AG04450 (cell line): ENCODE measurements at regions of chr7 and their contacts with region 1.

Region 1: DNA sequence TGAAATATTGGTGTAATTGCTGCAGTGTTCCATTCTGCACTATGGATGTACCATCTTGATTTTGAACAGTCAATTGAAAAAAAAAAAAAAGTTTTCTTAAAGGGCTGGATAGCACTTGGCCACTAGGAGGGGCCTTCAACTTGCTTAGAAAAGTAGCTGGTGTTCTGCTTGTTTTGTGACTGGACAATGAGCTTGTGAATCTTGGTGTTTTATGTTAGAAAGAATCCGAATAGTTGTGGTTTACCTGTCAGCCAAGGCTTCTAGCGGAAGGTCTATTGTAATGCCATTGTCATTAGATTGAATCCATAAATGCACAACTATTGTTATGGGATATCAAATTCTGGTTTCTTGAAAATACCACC is 77.1 kb downstream of the BMPER start:
- DNase-seq: no peak
- H3K4me3 ChIP-seq: no peak overlapping the region
- H3K27ac ChIP-seq: no peak overlapping the region
- H3K27me3 ChIP-seq: no peaks in the 10 kb centered on the region
- CTCF ChIP-seq: peak; percentile 72

Region 2: DNA sequence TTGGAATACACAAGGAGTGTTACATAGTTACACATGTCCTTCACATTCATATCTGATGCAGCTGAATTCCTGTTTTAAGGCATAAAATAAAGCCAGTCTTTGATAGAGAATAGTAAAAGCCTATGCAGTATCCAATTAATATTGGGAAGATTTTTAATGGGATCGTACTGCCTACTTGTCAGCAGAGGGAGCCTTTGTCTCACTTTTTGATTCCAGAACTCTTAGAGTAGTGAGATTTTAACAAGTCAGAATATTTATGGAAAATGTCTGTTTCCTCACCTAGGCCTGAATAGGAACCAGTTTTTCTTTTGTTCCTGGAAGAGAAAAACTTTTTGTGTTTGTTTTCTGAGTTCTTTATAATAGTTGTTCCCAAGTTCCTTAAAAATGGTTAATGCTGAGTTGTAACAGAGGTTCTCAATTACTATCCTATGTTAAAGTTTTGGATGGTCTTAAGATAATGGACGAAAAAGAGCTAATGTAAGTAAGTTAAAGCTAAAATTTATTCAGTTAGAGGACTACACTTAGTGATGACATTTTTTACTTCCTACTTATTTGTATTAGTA is 739.0 kb before region 1 on chr7:
- CTCF ChIA-PET with region 1: interaction called, 17 read pairs
- POLR2A ChIA-PET with region 1: no interaction called
- DNase-seq: peak; percentile 27
- H3K4me3 ChIP-seq: no peak overlapping the region
- H3K27ac ChIP-seq: no peak overlapping the region
- H3K27me3 ChIP-seq: no peaks in the 10 kb centered on the region
- CTCF ChIP-seq: peak; percentile 77

Region 3: GRCh38 chr7:34058801-34059489 is 76.5 kb after region 1 on chr7:
- CTCF ChIA-PET with region 1: interaction called, 14 read pairs
- POLR2A ChIA-PET with region 1: interaction called, 4 read pairs
- DNase-seq: no peak
- H3K4me3 ChIP-seq: no peak overlapping the region
- H3K27ac ChIP-seq: no peak overlapping the region
- H3K27me3 ChIP-seq: no peaks in the 10 kb centered on the region
- CTCF ChIP-seq: no peak

Region 4: DNA sequence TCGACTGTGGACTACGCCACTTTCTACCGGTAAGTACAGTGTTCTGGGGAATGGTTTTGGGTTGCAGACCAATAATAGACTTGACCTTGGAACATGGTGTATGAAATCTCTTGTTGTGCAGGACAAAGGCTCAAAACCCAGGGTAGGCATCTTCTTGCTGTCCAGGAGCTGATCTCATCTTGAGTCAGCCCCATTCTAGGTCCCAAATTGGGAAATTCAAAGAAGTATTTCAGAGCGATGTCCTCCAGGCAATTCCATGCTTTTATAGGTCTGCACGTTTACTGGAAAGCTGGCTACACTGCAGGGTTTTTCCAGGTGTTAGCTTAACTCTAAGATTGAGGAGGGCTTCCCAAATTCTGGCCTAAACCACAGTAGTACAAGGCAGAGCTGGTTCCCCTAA is 103.7 kb after region 1 on chr7:
- CTCF ChIA-PET with region 1: interaction called, 58 read pairs
- POLR2A ChIA-PET with region 1: no interaction called
- DNase-seq: no peak
- H3K4me3 ChIP-seq: no peak overlapping the region
- H3K27ac ChIP-seq: no peak overlapping the region
- H3K27me3 ChIP-seq: no peaks in the 10 kb centered on the region
- CTCF ChIP-seq: no peak

Region 5: DNA sequence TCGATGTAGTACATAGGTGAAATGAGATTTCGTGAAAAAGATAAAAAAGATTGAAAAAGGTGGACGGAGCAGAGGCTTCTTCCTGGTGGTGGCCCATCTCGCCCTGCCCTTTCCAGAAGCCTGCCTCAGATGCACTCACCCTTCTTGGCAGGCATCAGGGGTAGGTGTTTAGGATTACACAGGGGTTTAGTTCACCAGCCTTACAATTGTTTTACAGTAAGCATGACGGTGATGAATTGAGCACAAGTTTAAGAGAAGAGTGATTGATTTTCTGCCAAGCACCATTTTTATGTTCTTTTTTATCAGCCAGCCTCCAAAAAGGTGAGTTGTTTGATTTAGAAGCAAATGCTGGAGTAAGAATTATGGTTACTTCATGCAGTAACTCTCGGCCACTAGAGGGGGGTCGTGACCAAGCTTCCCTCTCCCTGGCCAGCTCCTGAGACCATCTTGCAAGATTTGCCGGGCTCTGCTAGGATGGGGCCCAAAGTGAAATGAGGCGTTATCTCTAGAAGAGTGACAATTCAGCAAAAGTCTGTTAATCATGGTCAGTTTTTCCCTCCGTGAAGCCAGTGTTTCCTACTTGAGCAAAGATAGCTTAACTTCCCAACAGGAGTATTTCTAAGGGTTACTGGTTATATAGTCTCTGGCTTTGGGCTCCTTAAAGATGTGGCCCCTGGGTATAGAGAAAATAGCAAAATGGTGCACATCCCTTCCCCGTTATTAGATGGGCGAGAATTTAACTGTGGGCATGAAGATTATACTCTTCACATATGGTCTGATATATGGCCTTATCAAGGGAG is 151.8 kb after region 1 on chr7:
- CTCF ChIA-PET with region 1: interaction called, 11 read pairs
- POLR2A ChIA-PET with region 1: no interaction called
- DNase-seq: peak; percentile 52
- H3K4me3 ChIP-seq: no peak overlapping the region
- H3K27ac ChIP-seq: peak overlapping the region; percentile 55
- H3K27me3 ChIP-seq: no peaks in the 10 kb centered on the region
- CTCF ChIP-seq: peak; percentile 87